ENCODE measurements at regions of chr4 and their contacts with region 1.

Region 1: DNA sequence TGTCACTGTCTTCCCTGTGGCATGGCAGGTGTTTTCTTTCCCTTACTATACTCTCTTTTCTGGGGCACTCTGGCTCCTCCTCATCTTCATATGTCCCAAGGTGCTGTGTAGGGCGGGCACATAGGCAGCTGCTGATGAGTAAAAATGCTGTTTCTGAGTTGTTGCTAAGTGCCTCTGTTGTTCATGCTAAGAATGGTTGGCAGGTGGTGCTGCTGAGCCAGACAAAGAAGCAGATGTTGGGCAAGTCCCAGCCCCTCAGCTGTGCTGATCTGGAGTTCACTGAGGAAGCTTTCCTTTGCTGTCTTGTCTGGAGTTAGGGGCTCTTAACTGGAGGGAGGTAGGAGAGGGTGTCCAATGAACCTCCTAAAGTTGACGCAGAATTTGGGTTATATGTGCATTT is 40.6 kb downstream of the HADH start:
- DNase-seq: peak in 1 of 2 experiments; percentile 15
- H3K4me3 ChIP-seq: no peak overlapping the region
- H3K27ac ChIP-seq: no peak overlapping the region
- H3K4me1 ChIP-seq: no peaks in the 10 kb centered on the region
- H3K27me3 ChIP-seq: no peaks in the 10 kb centered on the region
- CTCF ChIP-seq: peak; percentile 61

Region 2: DNA sequence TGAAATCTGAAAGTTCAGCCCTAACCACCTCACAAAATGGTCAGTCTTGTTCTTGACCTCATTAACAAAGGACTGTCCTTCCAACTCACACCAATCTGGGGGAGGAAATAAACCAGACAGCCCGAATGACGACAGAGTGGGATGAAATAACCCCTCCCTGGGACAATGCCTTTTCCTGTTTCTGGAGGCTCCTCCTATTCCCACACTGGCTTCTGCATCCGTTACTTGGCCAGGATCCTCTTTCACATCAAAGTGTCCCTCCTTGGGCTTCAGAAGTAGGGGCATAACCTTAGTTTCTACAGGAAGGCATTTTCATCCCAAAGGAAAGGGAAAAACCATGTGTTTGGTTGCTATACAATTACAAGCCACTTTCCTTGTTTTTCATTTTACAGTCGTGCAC is 530.3 kb after region 1 on chr4:
- CTCF ChIA-PET with region 1: interaction called, 10 read pairs
- POLR2A ChIA-PET with region 1: no interaction called
- intact Hi-C with region 1: no loop called
- DNase-seq: no peak
- H3K4me3 ChIP-seq: no peak overlapping the region
- H3K27ac ChIP-seq: no peak overlapping the region
- H3K4me1 ChIP-seq: no peaks in the 10 kb centered on the region
- H3K27me3 ChIP-seq: no peaks in the 10 kb centered on the region
- CTCF ChIP-seq: no peak

Region 3: GRCh38 chr4:109389369-109390114 is 1359.2 kb after region 1 on chr4:
- CTCF ChIA-PET with region 1: no interaction called
- POLR2A ChIA-PET with region 1: no interaction called
- intact Hi-C with region 1: loop called (anchors 10 kb)
- DNase-seq: no peak
- H3K4me3 ChIP-seq: no peak overlapping the region
- H3K27ac ChIP-seq: no peak overlapping the region
- H3K4me1 ChIP-seq: no peaks in the 10 kb centered on the region
- H3K27me3 ChIP-seq: no peaks in the 10 kb centered on the region
- CTCF ChIP-seq: no peak

Measured in PC-9 (cell line).